K562 (cell line): ENCODE measurements at regions of chr18 and their contacts with region 1.

Region 1: DNA sequence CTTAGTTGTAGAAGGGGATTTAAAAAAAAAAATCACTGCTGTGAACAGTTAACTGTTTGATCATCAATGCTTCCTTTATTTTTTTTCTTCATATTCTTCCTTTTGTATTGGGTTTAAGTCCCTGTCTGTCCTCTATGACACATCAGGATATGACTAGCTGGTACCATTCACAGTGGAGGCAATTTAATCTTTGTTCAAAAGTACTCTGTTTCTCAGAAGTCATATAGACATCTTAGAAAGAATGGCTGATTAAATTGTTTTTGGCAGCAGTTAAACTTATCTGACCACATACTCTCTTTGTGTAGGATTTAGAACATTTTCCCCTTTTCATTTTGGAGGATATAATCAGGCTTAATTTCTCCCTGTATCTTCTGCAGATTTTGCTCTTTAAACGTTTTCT is 807.8 kb upstream of the CDH2 start:
- DNase-seq: no peak
- ATAC-seq: no peak
- H3K4me3 ChIP-seq: no peak overlapping the region
- H3K27ac ChIP-seq: no peak overlapping the region
- H3K4me1 ChIP-seq: no peaks in the 10 kb centered on the region
- H3K27me3 ChIP-seq: no peaks in the 10 kb centered on the region
- CTCF ChIP-seq: no peak
- EP300 ChIP-seq: no peak
- POLR2A ChIP-seq: no peak
- RAD21 ChIP-seq: no peak

Region 2: GRCh38 chr18:27627927-27628326 is 1356.8 kb before region 1 on chr18:
- CTCF ChIA-PET with region 1: no interaction called
- POLR2A ChIA-PET with region 1: no interaction called
- in situ Hi-C with region 1: no loop called
- intact Hi-C with region 1: loop called (anchors 10 kb)
- DNase-seq: no peak
- ATAC-seq: no peak
- H3K4me3 ChIP-seq: no peak overlapping the region
- H3K27ac ChIP-seq: no peak overlapping the region
- H3K4me1 ChIP-seq: no peaks in the 10 kb centered on the region
- H3K27me3 ChIP-seq: no peaks in the 10 kb centered on the region
- CTCF ChIP-seq: no peak
- EP300 ChIP-seq: no peak
- POLR2A ChIP-seq: no peak
- RAD21 ChIP-seq: no peak

Region 3: GRCh38 chr18:28903306-28903705 is 81.4 kb before region 1 on chr18:
- CTCF ChIA-PET with region 1: no interaction called
- POLR2A ChIA-PET with region 1: no interaction called
- in situ Hi-C with region 1: no loop called
- intact Hi-C with region 1: no loop called
- DNase-seq: no peak
- ATAC-seq: no peak
- H3K4me3 ChIP-seq: no peak overlapping the region
- H3K27ac ChIP-seq: no peak overlapping the region
- H3K4me1 ChIP-seq: no peaks in the 10 kb centered on the region
- H3K27me3 ChIP-seq: no peaks in the 10 kb centered on the region
- CTCF ChIP-seq: no peak
- EP300 ChIP-seq: no peak
- POLR2A ChIP-seq: no peak
- RAD21 ChIP-seq: no peak